K562 (cell line): ENCODE measurements at regions of chr17 and their contacts with region 1.

Region 1: DNA sequence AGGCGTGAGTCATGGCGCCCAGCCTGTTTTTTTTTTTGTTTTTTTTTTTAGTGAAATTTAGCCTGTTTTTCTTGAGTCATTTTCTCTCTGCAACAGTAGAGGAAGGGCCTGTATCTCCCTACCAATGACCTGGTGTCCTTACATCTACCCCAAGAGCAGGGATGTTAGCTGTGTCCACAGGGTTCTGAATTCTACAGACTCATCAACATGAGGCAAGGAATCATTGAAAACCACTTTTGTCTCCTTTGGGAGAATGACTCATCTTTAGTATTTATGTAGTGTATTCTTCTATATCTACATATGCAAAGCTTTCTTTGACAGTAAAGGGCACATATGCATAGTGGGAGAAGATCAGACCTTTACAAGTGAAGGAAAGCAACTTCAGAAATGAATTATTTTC is 105.3 kb downstream of the SPECC1 start:
- DNase-seq: no peak
- ATAC-seq: no peak
- H3K4me3 ChIP-seq: no peak overlapping the region
- H3K27ac ChIP-seq: no peak overlapping the region
- H3K4me1 ChIP-seq: no peaks in the 10 kb centered on the region
- H3K27me3 ChIP-seq: no peaks in the 10 kb centered on the region
- CTCF ChIP-seq: no peak
- EP300 ChIP-seq: no peak
- POLR2A ChIP-seq: no peak
- RAD21 ChIP-seq: no peak

Region 2: GRCh38 chr17:19986941-19987861 is 127.3 kb before region 1 on chr17:
- CTCF ChIA-PET with region 1: interaction called, 42 read pairs
- POLR2A ChIA-PET with region 1: no interaction called
- in situ Hi-C with region 1: loop called (anchors 5 kb)
- intact Hi-C with region 1: no loop called
- DNase-seq: peak in 1 of 4 experiments; percentile 19
- ATAC-seq: no peak; the same call in 2 of the 3 replicates
- H3K4me3 ChIP-seq: no peak overlapping the region
- H3K27ac ChIP-seq: peak overlapping the region; percentile 34; the same call in 2 of the 3 replicates
- H3K4me1 ChIP-seq: peaks cover 0 to 14% of the 10 kb centered on the region in 2 experiments; a peak in 2 of 5 replicates
- H3K27me3 ChIP-seq: no peaks in the 10 kb centered on the region
- CTCF ChIP-seq: no peak
- EP300 ChIP-seq: no peak
- POLR2A ChIP-seq: no peak
- RAD21 ChIP-seq: no peak

Region 3: GRCh38 chr17:20103454-20104446 is 10.7 kb before region 1 on chr17:
- CTCF ChIA-PET with region 1: no interaction called
- POLR2A ChIA-PET with region 1: no interaction called
- in situ Hi-C with region 1: no loop called
- intact Hi-C with region 1: no loop called
- DNase-seq: no peak
- ATAC-seq: no peak
- H3K4me3 ChIP-seq: no peak overlapping the region
- H3K27ac ChIP-seq: no peak overlapping the region
- H3K4me1 ChIP-seq: no peaks in the 10 kb centered on the region
- H3K27me3 ChIP-seq: no peaks in the 10 kb centered on the region
- CTCF ChIP-seq: no peak
- EP300 ChIP-seq: no peak
- POLR2A ChIP-seq: no peak
- RAD21 ChIP-seq: no peak

Region 4: DNA sequence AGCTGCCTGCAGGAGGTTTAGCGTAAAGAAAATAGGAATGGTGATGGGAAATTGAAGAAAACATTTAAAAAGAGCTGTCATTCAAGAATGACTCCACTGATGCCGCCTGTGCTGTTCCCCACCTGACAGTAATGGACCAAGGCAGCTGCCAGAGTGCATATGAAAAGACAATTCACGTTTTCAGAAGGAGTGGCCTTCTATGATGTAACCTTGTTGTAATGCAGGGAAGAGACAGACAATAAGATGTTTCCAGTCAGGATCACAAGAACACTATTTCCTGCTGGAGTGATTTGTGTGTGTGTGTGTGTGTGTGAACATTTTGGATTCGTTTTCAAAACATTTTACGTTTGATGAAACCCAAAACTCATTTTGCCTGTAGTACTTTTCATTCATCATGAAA is 149.1 kb after region 1 on chr17:
- CTCF ChIA-PET with region 1: no interaction called
- POLR2A ChIA-PET with region 1: no interaction called
- in situ Hi-C with region 1: no loop called
- intact Hi-C with region 1: no loop called
- DNase-seq: no peak
- ATAC-seq: peak; percentile 69
- H3K4me3 ChIP-seq: no peak overlapping the region
- H3K27ac ChIP-seq: no peak overlapping the region
- H3K4me1 ChIP-seq: peaks cover 4 to 14% of the 10 kb centered on the region in 2 experiments; a peak in 4 of 5 replicates
- H3K27me3 ChIP-seq: no peaks in the 10 kb centered on the region
- CTCF ChIP-seq: no peak
- EP300 ChIP-seq: peak; percentile 30; the same call in 1 of the 2 replicates
- POLR2A ChIP-seq: no peak
- RAD21 ChIP-seq: no peak